Caco-2 (cell line): ENCODE measurements at regions of chr17 and their contacts with region 1.

Region 1: DNA sequence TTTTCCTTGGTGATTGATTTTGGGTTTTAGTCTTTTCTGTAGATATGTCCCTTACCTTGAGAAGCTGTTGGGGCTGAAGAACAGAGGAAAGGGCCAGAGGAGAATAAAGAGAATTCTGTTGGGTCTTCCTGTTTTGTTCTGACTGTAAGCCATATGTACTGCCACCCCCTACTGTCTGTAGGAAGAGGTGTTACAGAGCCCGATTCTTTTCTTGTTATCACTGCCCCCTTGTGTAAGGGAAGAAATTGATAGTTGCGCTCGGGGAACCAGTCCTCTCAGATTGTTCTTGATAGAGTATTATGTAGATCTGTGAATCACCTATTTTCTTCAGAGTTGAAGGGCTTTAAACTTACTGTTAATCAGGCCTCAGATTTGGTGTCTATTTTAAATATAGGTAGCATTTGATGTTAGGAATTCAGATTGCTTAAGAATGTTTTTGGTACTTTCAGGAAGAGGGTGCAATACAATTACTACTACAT is 2.4 kb downstream of the TANC2 start:
- DNase-seq: peak; percentile 63 to 73
- H3K4me3 ChIP-seq: no peak overlapping the region
- H3K4me3 Mint-ChIP-seq: no peak overlapping the region
- H3K27ac Mint-ChIP-seq: no peak overlapping the region
- H3K4me1 ChIP-seq: no peaks in the 10 kb centered on the region
- H3K4me1 Mint-ChIP-seq: peaks cover 7% of the 10 kb centered on the region
- H3K27me3 ChIP-seq: no peaks in the 10 kb centered on the region
- H3K27me3 Mint-ChIP-seq: peaks cover 23% of the 10 kb centered on the region
- CTCF ChIP-seq: peak; percentile 87 to 95

Region 2: GRCh38 chr17:62671583-62672312 is 296.7 kb before region 1 on chr17:
- CTCF ChIA-PET with region 1: interaction called, 3 read pairs
- POLR2A ChIA-PET with region 1: no interaction called
- intact Hi-C with region 1: loop called (anchors 1 kb)
- DNase-seq: no peak
- H3K4me3 ChIP-seq: no peak overlapping the region
- H3K4me3 Mint-ChIP-seq: no peak overlapping the region
- H3K27ac Mint-ChIP-seq: no peak overlapping the region
- H3K4me1 ChIP-seq: no peaks in the 10 kb centered on the region
- H3K4me1 Mint-ChIP-seq: peaks cover 6% of the 10 kb centered on the region
- H3K27me3 ChIP-seq: no peaks in the 10 kb centered on the region
- H3K27me3 Mint-ChIP-seq: no peaks in the 10 kb centered on the region
- CTCF ChIP-seq: no peak

Region 3: GRCh38 chr17:62703775-62704378 is 264.6 kb before region 1 on chr17:
- CTCF ChIA-PET with region 1: interaction called, 3 read pairs
- POLR2A ChIA-PET with region 1: no interaction called
- intact Hi-C with region 1: loop called (anchors 1 kb)
- DNase-seq: peak; percentile 58 to 86
- H3K4me3 ChIP-seq: peak overlapping the region; percentile 33
- H3K4me3 Mint-ChIP-seq: peak overlapping the region; percentile 62
- H3K27ac Mint-ChIP-seq: no peak overlapping the region
- H3K4me1 ChIP-seq: peaks cover 14% of the 10 kb centered on the region
- H3K4me1 Mint-ChIP-seq: no peaks in the 10 kb centered on the region
- H3K27me3 ChIP-seq: peaks cover 9% of the 10 kb centered on the region
- H3K27me3 Mint-ChIP-seq: peaks cover 32% of the 10 kb centered on the region
- CTCF ChIP-seq: peak; percentile 80 to 82

Region 4: DNA sequence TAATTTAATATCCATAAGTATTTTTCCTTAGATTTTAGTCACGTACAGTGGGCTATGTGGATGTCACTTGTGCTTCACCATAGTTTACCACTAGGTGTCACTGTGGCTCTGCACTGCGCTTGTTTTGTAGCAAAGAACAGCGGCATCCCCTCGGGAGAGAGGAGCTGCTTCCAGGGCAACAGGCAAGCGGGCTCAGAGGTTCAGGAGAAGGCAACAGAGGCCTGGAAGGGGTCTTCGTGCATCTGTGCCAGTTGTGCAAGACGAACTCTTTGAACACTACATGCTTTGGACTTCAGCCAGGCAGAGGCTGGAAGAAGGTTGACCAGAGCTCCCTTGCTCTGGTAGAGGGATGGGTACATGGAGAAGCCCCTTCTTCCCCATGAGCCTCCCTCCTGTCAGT is 457.0 kb after region 1 on chr17:
- CTCF ChIA-PET with region 1: no interaction called
- POLR2A ChIA-PET with region 1: no interaction called
- intact Hi-C with region 1: no loop called
- DNase-seq: peak; percentile 76 to 83
- H3K4me3 ChIP-seq: no peak overlapping the region
- H3K4me3 Mint-ChIP-seq: no peak overlapping the region
- H3K27ac Mint-ChIP-seq: no peak overlapping the region
- H3K4me1 ChIP-seq: no peaks in the 10 kb centered on the region
- H3K4me1 Mint-ChIP-seq: no peaks in the 10 kb centered on the region
- H3K27me3 ChIP-seq: no peaks in the 10 kb centered on the region
- H3K27me3 Mint-ChIP-seq: peaks cover 8% of the 10 kb centered on the region
- CTCF ChIP-seq: peak; percentile 89 to 96